Tibial artery (tissue), 4 donors: ENCODE measurements at regions of chr2 and their contacts with region 1.

Region 1: GRCh38 chr2:241686649-241687425 is at the start of gene DTYMK:
- DNase-seq: peak; percentile 96 to 98
- H3K4me3 ChIP-seq: peak within 1 kb of the TSS; percentile 74 to 89
- H3K27ac ChIP-seq: peak within 1 kb of the TSS; percentile 87 to 95
- H3K4me1 ChIP-seq: peaks cover 0 to 33% (median 27%) of the 10 kb centered on the region in 4 donors
- H3K27me3 ChIP-seq: no peaks in the 10 kb centered on the region
- CTCF ChIP-seq: no peak

Region 2: GRCh38 chr2:241734467-241735208 is 47.8 kb after region 1 on chr2 and contains the start of gene D2HGDH:
- intact Hi-C with region 1: loop called (anchors 5 kb)
- DNase-seq: peak; percentile 91 to 96
- H3K4me3 ChIP-seq: peak within 1 kb of the TSS; percentile 95 to 96
- H3K27ac ChIP-seq: peak within 1 kb of the TSS; percentile 84 to 87
- H3K4me1 ChIP-seq: peaks cover 0 to 17% (median 13%) of the 10 kb centered on the region in 4 donors
- H3K27me3 ChIP-seq: no peaks in the 10 kb centered on the region
- CTCF ChIP-seq: no peak

Region 3: DNA sequence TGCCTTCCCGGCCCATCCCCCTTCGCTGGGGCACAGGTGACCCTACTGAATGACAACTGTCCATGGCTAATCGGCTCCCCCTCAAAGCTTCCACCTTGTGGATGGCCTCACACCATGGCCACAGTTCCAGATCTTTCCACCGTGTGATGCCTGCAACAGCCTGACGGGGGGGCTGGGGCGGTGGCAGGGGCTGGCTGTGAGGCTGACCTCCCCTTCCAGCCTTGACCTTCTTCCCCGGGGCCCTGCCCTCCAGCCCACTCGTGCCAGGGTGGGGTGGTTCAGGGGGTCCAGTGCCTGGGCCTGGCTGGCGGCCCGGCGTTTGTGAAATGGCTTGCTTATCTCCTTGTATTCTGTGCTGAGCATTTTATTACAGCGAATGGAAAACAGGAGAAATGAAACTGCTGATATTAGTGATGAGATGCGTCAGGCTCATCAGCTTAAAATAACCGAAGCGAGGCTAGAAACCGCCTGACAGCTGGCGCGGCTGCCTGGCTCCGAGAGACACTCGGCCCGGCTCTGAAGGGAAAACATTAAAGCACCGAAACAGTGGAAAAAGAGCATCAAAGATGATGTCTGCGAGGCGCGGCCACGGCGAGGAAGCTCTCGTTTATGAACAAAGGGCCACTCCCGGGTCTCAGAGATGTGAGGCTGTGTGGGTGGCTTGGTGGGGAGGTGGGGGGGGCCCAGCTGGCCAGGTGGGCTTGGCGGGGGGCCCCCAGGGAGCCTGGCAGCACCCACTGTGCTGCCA is 172.8 kb after region 1 on chr2:
- intact Hi-C with region 1: no loop called
- DNase-seq: peak; percentile 72 to 80
- H3K4me3 ChIP-seq: peak overlapping the region; percentile 16 to 24
- H3K27ac ChIP-seq: peak overlapping the region; percentile 56 to 63
- H3K4me1 ChIP-seq: peaks cover 0 to 22% (median 10%) of the 10 kb centered on the region in 4 donors
- H3K27me3 ChIP-seq: peaks cover 0 to 82% of the 10 kb centered on the region in 2 donors
- CTCF ChIP-seq: no peak